Activated CD4-positive, alpha-beta T cell treated with anti-CD3 and anti-CD28 coated beads for 36 hours (primary cell): ENCODE measurements at regions of chr7 and their contacts with region 1.

Region 1: DNA sequence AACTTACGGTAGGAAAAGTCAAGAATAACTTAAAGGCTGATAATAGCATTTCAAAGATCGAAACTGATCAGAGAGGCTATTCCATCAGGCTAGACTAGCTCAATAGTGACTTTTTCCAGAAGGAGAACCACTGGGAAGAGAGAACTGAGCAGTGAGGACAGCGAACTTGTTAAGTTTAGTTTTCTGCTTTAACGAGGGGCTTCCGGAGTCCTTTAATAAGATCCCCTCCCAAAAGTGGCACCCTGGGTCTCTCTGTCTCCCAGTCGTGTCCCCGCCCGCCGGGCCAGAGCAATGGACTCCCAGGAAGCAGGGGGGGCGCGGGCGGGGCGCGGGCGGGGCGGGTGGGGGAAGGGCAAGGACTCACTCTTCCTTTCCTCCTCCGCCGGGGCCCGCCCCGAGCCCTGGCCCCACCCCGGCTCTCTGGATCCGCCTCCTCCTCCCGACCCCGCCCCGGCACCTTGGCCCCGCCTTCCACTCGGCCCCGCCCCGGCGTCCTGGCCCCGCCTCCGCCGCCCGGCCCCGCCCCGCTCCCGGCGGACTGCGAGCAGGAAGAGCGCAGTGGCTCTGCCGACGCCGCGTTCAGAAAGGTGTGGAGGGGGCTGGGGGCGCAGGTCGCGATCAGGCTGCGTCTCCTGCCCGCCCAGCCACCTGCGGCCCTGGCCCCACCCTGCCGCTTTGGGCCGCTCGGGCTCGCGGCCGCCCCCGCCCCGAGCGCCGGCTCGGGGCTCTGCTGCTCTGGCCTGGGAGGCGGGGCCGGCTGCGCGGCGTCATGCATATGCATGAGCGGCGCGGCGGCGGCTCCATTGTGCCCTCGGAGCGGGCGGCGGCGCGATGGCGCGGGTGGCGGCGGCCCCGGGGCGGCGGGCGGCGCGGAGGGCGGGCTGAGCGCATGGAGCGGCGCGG is at the start of gene ZMIZ2:
- DNase-seq: peak; percentile 97
- ATAC-seq: peak; percentile 87
- H3K4me3 Mint-ChIP-seq: peak within 1 kb of the TSS; percentile 78
- H3K27ac Mint-ChIP-seq: peak within 1 kb of the TSS; percentile 97
- H3K4me1 Mint-ChIP-seq: peaks cover 31% of the 10 kb centered on the region
- H3K27me3 Mint-ChIP-seq: no peaks in the 10 kb centered on the region
- total RNA-seq, gene ZMIZ2: 82.8 to 106 TPM

Region 2: DNA sequence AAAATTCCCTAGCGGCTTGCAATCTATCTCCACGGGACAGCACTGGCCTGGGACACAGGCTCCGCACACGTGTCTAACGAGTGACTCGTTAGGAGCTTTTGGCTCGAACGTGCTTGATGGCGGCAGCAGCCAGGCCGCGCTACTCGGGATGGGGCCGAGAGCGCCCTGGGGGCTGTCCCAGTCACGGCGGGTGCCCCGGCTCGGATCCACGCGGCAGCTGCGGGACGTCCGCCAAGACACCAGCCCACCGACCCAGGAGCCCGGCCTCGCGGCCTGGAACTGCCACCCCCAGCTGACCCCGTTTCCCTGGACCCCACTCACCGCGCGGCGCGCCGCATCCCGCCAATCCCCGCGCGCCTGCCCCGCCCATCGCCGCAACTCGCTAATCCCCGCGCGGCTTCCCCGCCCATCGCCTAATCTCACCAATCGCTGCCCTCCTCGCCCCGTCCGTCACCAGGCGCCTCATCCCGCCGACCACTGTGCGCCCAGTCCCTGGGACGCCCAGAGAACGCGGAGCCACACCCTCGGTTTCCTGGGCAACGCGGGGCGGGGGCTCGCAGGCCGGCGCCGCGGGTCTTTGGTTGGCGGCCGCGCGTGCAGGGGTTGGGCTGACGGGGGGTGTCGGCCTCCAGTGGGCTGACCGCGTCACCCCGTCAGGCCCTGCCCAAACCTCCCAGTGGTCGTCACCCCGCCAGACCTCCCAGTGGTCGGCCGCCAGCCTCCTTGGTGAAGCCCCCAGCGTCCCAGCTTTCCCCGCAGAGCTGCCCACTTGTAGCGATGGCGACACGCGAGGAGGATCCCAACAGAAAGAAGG is 624.9 kb before region 1 on chr7 and contains the start of gene POLD2:
- CTCF ChIA-PET with region 1: no interaction called
- POLR2A ChIA-PET with region 1: no interaction called
- intact Hi-C with region 1: loop called in 1 of 2 experiments (anchors 1 kb)
- DNase-seq: peak; percentile 99
- ATAC-seq: peak; percentile 100
- H3K4me3 Mint-ChIP-seq: peak within 1 kb of the TSS; percentile 86
- H3K27ac Mint-ChIP-seq: peak within 1 kb of the TSS; percentile 89
- H3K4me1 Mint-ChIP-seq: peaks cover 42% of the 10 kb centered on the region
- H3K27me3 Mint-ChIP-seq: no peaks in the 10 kb centered on the region
- total RNA-seq, gene POLD2: 250 to 347 TPM

Region 3: GRCh38 chr7:44581879-44582603 is 166.3 kb before region 1 on chr7 and contains the start of gene TMED4:
- CTCF ChIA-PET with region 1: no interaction called
- POLR2A ChIA-PET with region 1: interaction called, 3 read pairs
- intact Hi-C with region 1: loop called (anchors 1 to 2 kb)
- DNase-seq: peak; percentile 100
- ATAC-seq: peak; percentile 95
- H3K4me3 Mint-ChIP-seq: peak within 1 kb of the TSS; percentile 85
- H3K27ac Mint-ChIP-seq: peak within 1 kb of the TSS; percentile 92
- H3K4me1 Mint-ChIP-seq: peaks cover 33% of the 10 kb centered on the region
- H3K27me3 Mint-ChIP-seq: no peaks in the 10 kb centered on the region
- total RNA-seq, gene TMED4: 71.6 to 73.0 TPM

Region 4: GRCh38 chr7:44615149-44615611 is 133.1 kb before region 1 on chr7:
- CTCF ChIA-PET with region 1: no interaction called
- POLR2A ChIA-PET with region 1: no interaction called
- intact Hi-C with region 1: loop called in 1 of 2 experiments (anchors 1 kb)
- DNase-seq: peak; percentile 43
- ATAC-seq: no peak
- H3K4me3 Mint-ChIP-seq: no peak overlapping the region
- H3K27ac Mint-ChIP-seq: peak overlapping the region; percentile 66
- H3K4me1 Mint-ChIP-seq: peaks cover 65% of the 10 kb centered on the region
- H3K27me3 Mint-ChIP-seq: no peaks in the 10 kb centered on the region

Region 5: GRCh38 chr7:44724276-44724675 is 24.0 kb before region 1 on chr7:
- CTCF ChIA-PET with region 1: no interaction called
- POLR2A ChIA-PET with region 1: no interaction called
- intact Hi-C with region 1: no loop called
- DNase-seq: no peak
- ATAC-seq: no peak
- H3K4me3 Mint-ChIP-seq: no peak overlapping the region
- H3K27ac Mint-ChIP-seq: no peak overlapping the region
- H3K4me1 Mint-ChIP-seq: no peaks in the 10 kb centered on the region
- H3K27me3 Mint-ChIP-seq: no peaks in the 10 kb centered on the region

Region 6: DNA sequence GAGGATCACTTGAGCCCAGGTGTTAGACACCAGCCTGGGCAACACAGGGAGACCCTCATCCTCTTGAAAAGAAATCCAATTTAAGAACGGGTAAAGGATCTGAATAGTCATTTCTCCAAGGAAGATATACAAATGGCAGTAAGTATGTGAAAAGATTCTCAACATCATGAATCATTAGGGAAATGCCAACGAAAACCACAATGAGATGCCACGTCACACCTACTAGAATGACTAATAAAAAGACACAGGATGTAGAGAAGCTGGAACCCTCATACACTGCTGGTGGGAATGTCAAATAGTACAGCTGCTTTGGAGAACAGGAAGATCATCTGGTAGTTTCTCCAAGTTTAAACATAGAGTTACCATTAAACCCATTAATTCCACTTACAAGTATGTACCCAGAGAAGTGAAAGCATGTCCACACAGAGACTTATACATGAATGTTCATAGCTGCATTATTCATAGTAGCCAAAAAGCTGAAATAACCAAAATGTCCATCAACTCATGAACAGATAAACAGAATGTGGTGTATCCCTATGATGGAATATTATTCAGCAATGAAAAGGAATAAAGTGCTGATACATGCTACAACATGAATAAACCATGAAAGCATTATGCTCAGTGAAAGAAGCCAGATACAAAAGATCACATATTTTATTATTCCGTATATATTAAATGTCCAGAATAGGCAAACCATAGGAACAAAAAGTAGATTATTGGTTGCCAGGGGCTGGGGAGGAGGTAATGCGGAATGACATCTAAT is 12.7 kb before region 1 on chr7:
- CTCF ChIA-PET with region 1: interaction called, 5 read pairs
- POLR2A ChIA-PET with region 1: interaction called, 5 read pairs
- intact Hi-C with region 1: loop called in 1 of 2 experiments (anchors 1 kb)
- DNase-seq: peak; percentile 69
- ATAC-seq: peak; percentile 93
- H3K4me3 Mint-ChIP-seq: peak overlapping the region; percentile 6
- H3K27ac Mint-ChIP-seq: peak overlapping the region; percentile 81
- H3K4me1 Mint-ChIP-seq: peaks cover 24% of the 10 kb centered on the region
- H3K27me3 Mint-ChIP-seq: no peaks in the 10 kb centered on the region

Region 7: DNA sequence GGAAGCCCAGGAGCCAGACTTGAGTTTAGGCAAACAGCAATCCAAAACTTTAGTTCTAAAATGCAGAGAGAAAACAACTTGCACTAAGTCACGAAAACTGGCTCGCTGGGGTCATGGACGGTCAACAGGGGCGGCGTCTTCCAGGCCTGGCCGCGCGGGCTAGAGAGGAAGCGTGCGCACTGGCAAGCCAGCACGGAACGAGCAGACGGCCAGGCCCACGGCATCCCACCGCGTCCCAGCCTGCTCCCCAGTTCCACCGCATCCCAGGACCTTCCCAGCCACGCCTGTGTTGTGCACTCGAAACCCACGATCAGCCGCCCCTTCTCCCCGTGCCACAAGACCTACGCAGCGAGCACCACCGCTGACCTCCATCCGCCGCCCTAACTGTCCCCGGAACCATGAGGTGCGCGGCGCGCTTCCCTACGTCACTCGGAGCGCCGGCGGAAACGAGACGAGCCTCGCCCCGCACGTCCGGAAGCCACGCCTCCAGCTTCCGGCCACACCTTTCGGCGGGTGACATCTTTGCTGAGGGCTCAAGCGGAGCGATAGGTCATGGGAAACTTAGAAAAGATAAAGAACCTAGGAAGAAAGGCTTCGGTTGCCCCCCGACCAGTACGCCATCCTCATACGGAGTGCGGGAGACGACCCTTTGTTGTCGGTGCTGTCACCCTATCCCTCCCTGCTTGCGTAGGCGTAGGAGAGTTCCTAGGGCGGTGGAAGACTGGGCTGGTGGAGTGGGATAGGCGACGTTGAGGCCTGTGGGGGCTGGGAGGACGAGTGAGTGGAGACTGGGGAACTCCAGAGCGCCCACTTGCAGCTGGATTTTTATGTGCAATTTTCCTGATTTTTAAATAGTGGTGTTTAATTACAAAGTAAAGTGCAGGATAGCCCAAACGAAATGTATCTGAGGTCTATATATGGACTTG is 363.3 kb after region 1 on chr7 and contains the start of gene TBRG4:
- CTCF ChIA-PET with region 1: no interaction called
- POLR2A ChIA-PET with region 1: no interaction called
- intact Hi-C with region 1: loop called in 1 of 2 experiments (anchors 1 kb)
- DNase-seq: peak; percentile 97
- ATAC-seq: peak; percentile 95
- H3K4me3 Mint-ChIP-seq: peak within 1 kb of the TSS; percentile 94
- H3K27ac Mint-ChIP-seq: peak within 1 kb of the TSS; percentile 96
- H3K4me1 Mint-ChIP-seq: peaks cover 35% of the 10 kb centered on the region
- H3K27me3 Mint-ChIP-seq: peaks cover 2% of the 10 kb centered on the region
- total RNA-seq, gene TBRG4: 158 to 163 TPM